Naive thymus-derived CD4-positive, alpha-beta T cell (primary cell): ENCODE measurements at regions of chr6 and their contacts with region 1.

Region 1: DNA sequence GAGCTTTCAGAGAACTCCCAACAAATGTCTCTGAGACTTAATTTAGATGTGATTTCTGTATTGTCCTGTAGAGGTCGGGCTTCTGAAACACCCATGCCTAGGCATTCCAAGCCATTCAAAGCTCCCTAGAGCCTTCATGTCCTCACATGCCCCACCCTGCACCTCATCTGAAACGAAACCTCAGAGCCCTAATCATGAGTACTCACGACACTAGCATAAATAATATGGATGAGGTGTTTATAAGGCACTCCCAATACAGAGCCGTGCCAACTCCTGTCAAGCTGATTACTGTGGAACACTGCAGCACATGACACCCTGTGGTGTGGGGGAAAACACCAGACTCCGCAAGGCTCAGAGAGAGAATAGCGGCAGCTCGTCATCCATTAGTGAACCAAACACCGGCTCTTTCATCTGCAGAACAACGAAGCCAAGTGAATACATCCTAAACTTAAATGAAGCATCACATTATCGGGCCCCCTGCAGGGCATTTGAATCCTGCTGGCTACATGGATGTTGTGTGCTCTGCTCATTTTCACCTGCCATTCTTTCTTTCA is 83.8 kb downstream of the FNDC1 start:
- DNase-seq: peak in 4 of 9 donors; percentile 4 to 14 (median 12)
- ATAC-seq: peak; percentile 69
- H3K4me3 ChIP-seq: no peak overlapping the region
- H3K4me3 Mint-ChIP-seq: peak overlapping the region in 1 of 10 donors; percentile 21
- H3K27ac ChIP-seq: no peak overlapping the region
- H3K27ac Mint-ChIP-seq: no peak overlapping the region
- H3K4me1 ChIP-seq: no peaks in the 10 kb centered on the region
- H3K4me1 Mint-ChIP-seq: peaks cover 0 to 5% (median 0%) of the 10 kb centered on the region in 7 donors
- H3K27me3 ChIP-seq: no peaks in the 10 kb centered on the region
- H3K27me3 Mint-ChIP-seq: peaks cover 2 to 32% (median 16%) of the 10 kb centered on the region in 5 donors

Region 2: GRCh38 chr6:159203304-159204005 is 49.6 kb before region 1 on chr6:
- CTCF ChIA-PET with region 1: no interaction called
- POLR2A ChIA-PET with region 1: no interaction called
- intact Hi-C with region 1: no loop called
- DNase-seq: no peak
- ATAC-seq: no peak
- H3K4me3 ChIP-seq: no peak overlapping the region
- H3K4me3 Mint-ChIP-seq: no peak overlapping the region
- H3K27ac ChIP-seq: no peak overlapping the region
- H3K27ac Mint-ChIP-seq: no peak overlapping the region
- H3K4me1 ChIP-seq: no peaks in the 10 kb centered on the region
- H3K4me1 Mint-ChIP-seq: peaks cover 0 to 8% (median 0%) of the 10 kb centered on the region in 7 donors
- H3K27me3 ChIP-seq: no peaks in the 10 kb centered on the region
- H3K27me3 Mint-ChIP-seq: peaks cover 6 to 25% (median 13%) of the 10 kb centered on the region in 5 donors

Region 3: GRCh38 chr6:159941286-159942113 is 688.5 kb after region 1 on chr6:
- CTCF ChIA-PET with region 1: no interaction called
- POLR2A ChIA-PET with region 1: no interaction called
- intact Hi-C with region 1: loop called in 1 of 2 experiments (anchors 10 kb)
- DNase-seq: peak in 7 of 9 donors; percentile 23 to 55 (median 40)
- ATAC-seq: peak; percentile 85
- H3K4me3 ChIP-seq: no peak overlapping the region
- H3K4me3 Mint-ChIP-seq: no peak overlapping the region
- H3K27ac ChIP-seq: no peak overlapping the region
- H3K27ac Mint-ChIP-seq: no peak overlapping the region
- H3K4me1 ChIP-seq: no peaks in the 10 kb centered on the region
- H3K4me1 Mint-ChIP-seq: peaks cover 0 to 7% (median 0%) of the 10 kb centered on the region in 7 donors
- H3K27me3 ChIP-seq: no peaks in the 10 kb centered on the region
- H3K27me3 Mint-ChIP-seq: peaks cover 0 to 28% (median 3%) of the 10 kb centered on the region in 5 donors